ENCODE measurements at regions of chr16 and their contacts with region 1.

Region 1: GRCh38 chr16:9134739-9135138 is 43.3 kb downstream of the HAPSTR1 start:
- DNase-seq: peak; percentile 47
- H3K4me3 ChIP-seq: no peak overlapping the region
- H3K27ac ChIP-seq: no peak overlapping the region
- H3K4me1 ChIP-seq: no peaks in the 10 kb centered on the region
- H3K27me3 ChIP-seq: no peaks in the 10 kb centered on the region
- CTCF ChIP-seq: peak; percentile 57 to 70
- POLR2A ChIP-seq: no peak

Region 2: GRCh38 chr16:8373676-8374431 is 760.9 kb before region 1 on chr16:
- CTCF ChIA-PET with region 1: no interaction called
- POLR2A ChIA-PET with region 1: no interaction called
- dilution Hi-C with region 1: no loop called
- intact Hi-C with region 1: no loop called
- DNase-seq: no peak
- H3K4me3 ChIP-seq: no peak overlapping the region
- H3K27ac ChIP-seq: no peak overlapping the region
- H3K4me1 ChIP-seq: no peaks in the 10 kb centered on the region
- H3K27me3 ChIP-seq: no peaks in the 10 kb centered on the region
- CTCF ChIP-seq: no peak
- POLR2A ChIP-seq: no peak

Region 3: DNA sequence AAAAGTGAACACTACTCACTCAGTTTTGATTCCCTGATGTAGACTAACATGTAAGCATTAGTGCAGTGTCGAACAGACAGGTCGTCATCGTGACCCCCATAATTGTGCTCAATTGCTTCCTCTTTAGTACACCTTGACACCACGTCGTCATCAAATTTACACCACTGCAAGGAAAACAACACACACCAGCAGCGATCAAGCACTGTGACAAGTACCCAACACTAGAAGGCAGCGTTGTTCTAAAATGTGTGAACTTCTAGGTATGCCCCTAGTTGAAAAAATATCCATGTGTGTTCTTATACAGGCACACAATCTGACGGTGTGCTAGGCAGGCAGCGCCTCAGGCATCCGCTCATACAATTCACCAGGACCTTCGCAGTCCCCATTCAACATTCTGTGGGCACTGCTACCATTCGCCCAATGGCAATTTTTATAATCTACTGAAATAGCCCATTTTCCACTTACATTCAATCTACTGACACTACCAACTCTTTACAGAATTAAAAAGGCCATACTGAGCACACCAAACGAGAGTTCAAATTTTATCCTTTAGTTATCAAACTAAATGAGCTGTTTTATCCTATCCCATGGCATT is 229.5 kb before region 1 on chr16:
- CTCF ChIA-PET with region 1: interaction called, 13 read pairs
- POLR2A ChIA-PET with region 1: no interaction called
- dilution Hi-C with region 1: no loop called
- intact Hi-C with region 1: loop called (anchors 1 kb)
- DNase-seq: peak; percentile 42
- H3K4me3 ChIP-seq: no peak overlapping the region
- H3K27ac ChIP-seq: no peak overlapping the region
- H3K4me1 ChIP-seq: no peaks in the 10 kb centered on the region
- H3K27me3 ChIP-seq: no peaks in the 10 kb centered on the region
- CTCF ChIP-seq: peak; percentile 27 to 50
- POLR2A ChIP-seq: no peak

Region 4: DNA sequence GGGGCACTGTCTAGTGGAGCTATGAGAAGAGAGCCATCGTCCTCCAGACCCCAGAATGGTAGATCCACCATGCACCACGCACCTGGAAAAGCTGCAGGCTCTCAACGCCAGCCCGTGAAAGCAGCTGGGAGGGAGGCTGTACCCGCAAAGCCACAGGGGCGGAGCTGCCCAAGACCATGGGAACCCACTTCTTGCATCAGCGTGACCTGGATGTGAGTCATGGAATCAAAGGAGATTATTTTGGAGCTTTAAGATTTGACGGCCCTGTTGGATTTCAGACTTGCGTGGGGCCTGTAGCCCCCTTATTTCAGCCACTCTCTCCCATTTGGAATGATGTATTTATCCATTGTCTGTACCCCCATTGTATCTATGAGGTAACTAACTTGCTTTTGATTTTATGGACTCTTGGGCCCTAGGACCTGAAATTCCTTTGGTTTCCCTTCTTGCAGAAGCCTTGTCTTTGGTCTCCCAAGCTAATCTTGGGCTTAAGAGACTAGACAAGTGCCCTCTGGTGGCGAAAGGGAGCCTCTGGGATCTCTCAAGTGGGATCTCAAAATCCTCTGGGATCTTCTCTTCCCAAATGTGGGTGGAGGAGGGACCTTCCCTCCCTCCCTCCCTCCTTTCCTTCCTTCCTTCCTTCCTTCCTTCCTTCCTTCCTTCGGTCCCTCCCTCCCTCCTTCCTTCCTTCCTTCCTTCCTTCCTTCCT is 101.5 kb before region 1 on chr16:
- CTCF ChIA-PET with region 1: interaction called, 11 read pairs
- POLR2A ChIA-PET with region 1: no interaction called
- dilution Hi-C with region 1: no loop called
- intact Hi-C with region 1: no loop called
- DNase-seq: peak; percentile 41
- H3K4me3 ChIP-seq: no peak overlapping the region
- H3K27ac ChIP-seq: no peak overlapping the region
- H3K4me1 ChIP-seq: no peaks in the 10 kb centered on the region
- H3K27me3 ChIP-seq: no peaks in the 10 kb centered on the region
- CTCF ChIP-seq: peak; percentile 26 to 70
- POLR2A ChIP-seq: no peak

Region 5: DNA sequence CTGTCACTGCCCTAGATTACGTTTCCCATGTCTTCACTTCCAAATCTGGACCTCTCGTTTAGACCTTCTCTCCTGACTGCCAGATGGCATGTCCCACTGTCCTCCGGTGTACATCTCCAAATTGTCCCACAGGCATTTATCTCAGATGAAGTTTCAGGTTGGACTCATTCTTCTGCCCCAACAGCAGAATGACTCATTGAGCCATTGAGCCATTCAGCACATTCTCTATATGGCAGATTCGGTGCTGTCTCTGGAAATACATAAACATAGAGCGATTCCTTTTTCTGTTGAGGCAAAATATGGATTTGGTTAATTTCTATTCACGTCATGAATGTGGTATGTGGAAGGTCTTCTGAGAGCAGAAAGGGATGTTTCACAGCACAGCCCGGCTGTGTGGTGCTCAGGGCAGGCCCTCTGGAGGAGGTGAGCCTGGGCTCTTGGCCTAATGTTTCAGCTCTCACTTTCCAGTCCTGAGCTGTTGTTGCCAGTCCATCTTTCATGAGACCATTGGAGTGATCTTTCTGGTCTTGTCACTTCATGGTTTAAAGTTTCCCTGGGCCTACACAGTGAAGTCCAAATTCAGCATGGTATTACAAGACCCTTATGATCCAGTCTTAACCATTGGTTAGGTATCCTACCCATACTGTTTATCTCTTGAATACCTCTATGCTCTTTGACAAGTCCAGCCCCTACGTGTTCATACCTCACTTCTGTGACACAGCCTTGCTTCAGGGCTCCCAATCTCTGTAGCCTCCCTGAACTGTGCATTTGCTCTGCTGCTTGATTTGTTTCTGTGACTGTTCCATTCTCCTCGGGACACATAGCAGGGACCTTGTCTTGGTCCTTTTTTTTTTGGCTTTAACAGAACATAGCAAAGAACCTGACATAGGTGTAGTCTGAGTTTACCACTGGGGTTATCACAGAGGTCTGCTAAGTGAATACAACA is 27.4 kb before region 1 on chr16:
- CTCF ChIA-PET with region 1: interaction called, 11 read pairs
- POLR2A ChIA-PET with region 1: no interaction called
- dilution Hi-C with region 1: no loop called
- intact Hi-C with region 1: no loop called
- DNase-seq: no peak
- H3K4me3 ChIP-seq: no peak overlapping the region
- H3K27ac ChIP-seq: no peak overlapping the region
- H3K4me1 ChIP-seq: peaks cover 39% of the 10 kb centered on the region
- H3K27me3 ChIP-seq: no peaks in the 10 kb centered on the region
- CTCF ChIP-seq: no peak
- POLR2A ChIP-seq: no peak

Region 6: GRCh38 chr16:9365376-9365728 is 230.6 kb after region 1 on chr16:
- CTCF ChIA-PET with region 1: no interaction called
- POLR2A ChIA-PET with region 1: no interaction called
- dilution Hi-C with region 1: no loop called
- intact Hi-C with region 1: no loop called
- DNase-seq: no peak
- H3K4me3 ChIP-seq: no peak overlapping the region
- H3K27ac ChIP-seq: no peak overlapping the region
- H3K4me1 ChIP-seq: no peaks in the 10 kb centered on the region
- H3K27me3 ChIP-seq: no peaks in the 10 kb centered on the region
- CTCF ChIP-seq: no peak
- POLR2A ChIP-seq: no peak

Region 7: DNA sequence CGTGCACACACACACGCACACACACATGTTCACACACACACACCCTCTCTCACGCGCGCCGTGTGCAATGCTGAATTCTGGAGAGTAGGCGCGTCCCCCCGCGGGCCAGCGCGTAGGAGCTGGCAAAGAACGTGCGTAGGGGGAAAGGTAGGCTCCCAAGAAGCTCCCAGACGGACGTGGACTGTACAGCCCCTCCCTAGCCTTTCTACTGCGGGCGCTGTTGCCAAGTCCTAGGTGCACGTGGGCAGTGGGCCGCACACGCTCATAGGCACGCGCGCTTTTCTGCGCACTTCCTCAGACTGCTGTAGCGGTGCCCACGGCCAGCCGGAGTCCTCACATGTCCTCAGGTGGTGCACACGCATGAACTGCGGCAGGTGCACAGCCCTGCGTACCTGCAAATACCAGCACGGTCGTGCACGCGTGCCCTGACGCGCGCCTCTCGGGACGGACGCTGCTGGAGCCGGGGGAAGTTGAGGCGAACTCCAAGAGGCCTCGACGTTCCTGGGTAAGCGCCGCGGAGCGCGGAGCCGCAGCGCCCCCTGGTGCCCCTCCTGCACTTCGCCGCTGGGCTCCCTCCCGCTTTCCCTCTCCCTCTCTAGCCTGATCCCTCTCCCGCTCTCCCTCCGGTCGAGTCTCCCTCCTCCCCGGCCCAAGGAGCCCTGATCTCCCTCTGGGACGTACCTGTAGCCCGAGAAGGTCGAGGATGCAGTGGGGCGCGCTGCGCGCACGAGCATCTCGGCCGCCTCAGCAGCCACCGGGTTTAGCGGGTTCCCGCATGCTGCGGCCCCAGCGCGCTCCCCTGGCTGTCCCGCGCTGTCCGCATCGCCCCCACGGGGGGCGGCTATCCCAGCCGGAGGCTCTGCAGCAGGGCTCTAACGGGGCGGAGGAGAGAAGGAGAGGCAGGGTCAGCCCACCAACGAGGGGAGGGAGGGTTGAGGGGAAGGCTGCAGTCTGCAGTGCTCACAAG is 1046.7 kb after region 1 on chr16:
- CTCF ChIA-PET with region 1: interaction called, 43 read pairs
- POLR2A ChIA-PET with region 1: no interaction called
- dilution Hi-C with region 1: no loop called
- intact Hi-C with region 1: loop called (anchors 1 kb)
- DNase-seq: peak; percentile 35
- H3K4me3 ChIP-seq: no peak overlapping the region
- H3K27ac ChIP-seq: no peak overlapping the region
- H3K4me1 ChIP-seq: no peaks in the 10 kb centered on the region
- H3K27me3 ChIP-seq: peaks cover 10 to 14% of the 10 kb centered on the region in 2 experiments
- CTCF ChIP-seq: peak; percentile 71 to 94
- POLR2A ChIP-seq: no peak